ENCODE measurements at regions of chr17 and their contacts with region 1.

Region 1: DNA sequence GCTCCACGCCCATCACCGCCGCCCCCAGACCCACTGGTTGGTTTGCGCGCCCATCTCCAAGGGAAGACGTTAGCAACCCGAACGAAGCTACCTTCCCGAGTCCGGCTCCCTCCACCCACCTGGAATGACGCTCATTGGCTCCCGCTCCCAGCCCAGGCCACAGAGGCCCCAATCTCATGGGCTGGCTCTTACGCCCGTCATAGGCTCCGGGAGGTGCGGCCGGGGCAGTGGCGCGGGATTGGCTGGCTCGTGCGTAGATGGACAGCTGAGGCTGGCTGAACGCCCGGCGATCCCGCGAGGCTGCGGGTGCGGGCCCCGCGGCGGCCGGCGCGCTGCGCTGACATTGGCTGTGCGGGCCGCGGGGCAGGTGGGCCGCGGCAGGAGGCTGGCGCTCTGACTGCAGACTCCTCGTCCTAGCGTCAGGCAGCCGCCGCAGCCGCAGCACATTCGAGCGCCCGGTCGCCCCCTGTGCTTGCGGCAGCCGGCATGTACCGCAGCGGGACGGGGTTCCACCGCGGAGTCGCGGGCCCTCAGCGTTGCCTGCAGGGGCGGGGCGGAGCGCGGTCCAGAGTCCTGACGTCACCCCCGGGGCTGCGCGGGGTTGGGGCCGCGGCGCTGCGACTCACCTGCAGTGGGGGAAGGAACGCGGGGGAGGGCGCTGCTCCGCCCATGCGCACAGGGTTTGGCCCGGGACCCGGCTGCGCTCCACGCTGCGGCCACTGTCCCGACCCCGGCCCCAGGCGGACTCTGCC is 453 bp upstream of the MYH10 start:
- DNase-seq: peak; percentile 100
- ATAC-seq: peak; percentile 96
- H3K4me3 ChIP-seq: peak overlapping the region; percentile 75
- H3K27ac ChIP-seq: peak overlapping the region; percentile 30; the same call in 1 of the 2 replicates
- H3K4me1 ChIP-seq: peaks cover 2% of the 10 kb centered on the region; the same call in 1 of the 2 replicates
- H3K27me3 ChIP-seq: no peaks in the 10 kb centered on the region
- CTCF ChIP-seq: no peak
- POLR2A ChIP-seq: no peak
- RAD21 ChIP-seq: no peak

Region 2: DNA sequence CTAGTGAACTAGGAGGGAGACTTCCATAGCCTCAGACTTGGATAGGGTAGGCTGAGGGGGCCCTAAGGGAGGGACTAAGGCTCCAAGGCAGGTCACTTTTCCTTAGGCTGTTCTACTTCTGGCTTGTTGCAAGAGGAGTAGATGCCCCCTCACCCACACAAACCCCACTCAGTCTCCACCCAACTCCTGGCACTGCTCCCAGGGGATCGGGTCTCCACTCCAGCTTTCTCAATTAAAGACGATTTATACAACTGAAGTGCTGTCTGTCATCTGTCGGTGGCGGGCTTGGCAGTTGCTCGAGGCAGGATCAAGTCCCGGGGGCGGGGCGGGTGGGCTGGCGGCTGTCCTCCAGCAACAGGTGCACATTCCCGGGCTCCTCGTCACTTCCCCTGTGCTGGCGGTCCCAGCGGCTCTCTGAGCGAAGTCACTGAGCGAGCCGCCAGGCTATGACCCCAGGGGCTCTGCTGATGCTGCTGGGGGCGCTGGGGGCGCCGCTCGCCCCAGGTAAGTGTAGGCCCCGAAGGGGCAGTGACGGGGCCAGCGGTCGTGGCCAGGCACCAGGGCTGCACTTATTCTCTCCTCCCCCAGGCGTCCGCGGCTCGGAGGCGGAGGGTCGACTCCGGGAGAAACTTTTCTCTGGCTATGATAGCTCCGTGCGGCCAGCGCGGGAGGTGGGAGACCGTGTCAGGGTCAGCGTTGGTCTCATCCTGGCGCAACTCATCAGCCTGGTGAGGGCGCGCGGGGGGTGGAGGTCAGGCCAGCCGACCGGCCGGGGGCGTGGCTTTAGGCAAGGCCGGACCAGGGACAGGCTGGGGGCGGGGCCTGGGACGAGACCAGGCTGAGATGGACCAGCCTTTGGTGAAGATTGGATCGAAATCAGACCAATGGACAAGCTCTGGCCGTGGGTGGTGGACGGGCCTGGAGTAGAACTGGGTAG is 1186.0 kb before region 1 on chr17 and contains the start of gene CHRNB1:
- CTCF ChIA-PET with region 1: no interaction called
- POLR2A ChIA-PET with region 1: no interaction called
- dilution Hi-C with region 1: no loop called
- in situ Hi-C with region 1: no loop called
- intact Hi-C with region 1: no loop called
- DNase-seq: peak; percentile 27
- ATAC-seq: peak; percentile 82
- H3K4me3 ChIP-seq: peak within 1 kb of the TSS; percentile 32
- H3K27ac ChIP-seq: no peak within 1 kb of the TSS
- H3K4me1 ChIP-seq: peaks cover 22% of the 10 kb centered on the region
- H3K27me3 ChIP-seq: peaks cover 37% of the 10 kb centered on the region
- CTCF ChIP-seq: no peak
- POLR2A ChIP-seq: no peak
- RAD21 ChIP-seq: no peak
- total RNA-seq, gene CHRNB1: 4.2 and 4.3 TPM in 2 replicates

Region 3: DNA sequence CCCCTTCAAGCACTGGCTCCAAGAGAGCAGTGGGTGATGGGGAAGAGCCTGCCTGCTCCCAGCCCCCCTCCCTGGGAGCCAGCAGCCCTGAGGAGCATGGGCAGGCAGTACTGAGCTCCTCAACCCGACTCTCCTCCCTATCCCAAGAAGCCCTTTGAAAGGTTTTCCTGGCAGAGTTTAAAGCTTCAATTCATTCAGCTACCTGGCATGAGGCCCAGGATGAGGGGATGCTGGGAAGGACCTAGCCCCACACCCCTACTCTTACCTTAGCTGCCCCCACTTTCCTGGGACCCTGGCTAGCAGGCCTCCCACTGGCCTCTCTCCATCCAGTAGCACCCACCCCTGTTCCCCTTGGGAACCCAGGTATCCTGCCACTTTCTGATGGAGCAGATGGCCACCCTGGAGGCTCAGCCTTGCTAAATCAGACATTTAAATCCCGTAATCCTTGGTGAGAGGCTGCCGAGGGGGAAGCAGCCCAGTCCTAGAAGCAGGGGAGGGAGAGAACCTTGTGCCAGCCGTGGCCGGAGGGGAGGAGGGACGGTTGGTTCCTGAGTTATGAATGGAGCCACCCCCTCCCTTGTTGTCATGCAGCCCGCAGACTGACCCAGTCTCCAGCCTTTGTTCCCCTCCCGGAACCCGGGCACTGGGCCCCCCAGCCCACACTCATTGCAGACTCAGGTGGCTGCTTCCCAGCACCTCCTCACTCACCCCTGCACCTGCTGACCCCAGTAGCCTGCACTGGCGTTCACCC is 963.1 kb before region 1 on chr17:
- CTCF ChIA-PET with region 1: no interaction called
- POLR2A ChIA-PET with region 1: no interaction called
- dilution Hi-C with region 1: no loop called
- in situ Hi-C with region 1: no loop called
- intact Hi-C with region 1: no loop called
- DNase-seq: no peak
- ATAC-seq: no peak
- H3K4me3 ChIP-seq: no peak overlapping the region
- H3K27ac ChIP-seq: no peak overlapping the region
- H3K4me1 ChIP-seq: no peaks in the 10 kb centered on the region
- H3K27me3 ChIP-seq: no peaks in the 10 kb centered on the region
- CTCF ChIP-seq: no peak
- POLR2A ChIP-seq: no peak
- RAD21 ChIP-seq: no peak

Region 4: GRCh38 chr17:8383143-8383822 is 247.7 kb before region 1 on chr17 and contains the start of gene RPL26:
- CTCF ChIA-PET with region 1: no interaction called
- POLR2A ChIA-PET with region 1: no interaction called
- dilution Hi-C with region 1: no loop called
- in situ Hi-C with region 1: no loop called
- intact Hi-C with region 1: loop called (anchors 10 kb)
- DNase-seq: peak; percentile 98
- ATAC-seq: peak; percentile 86
- H3K4me3 ChIP-seq: peak within 1 kb of the TSS; percentile 98
- H3K27ac ChIP-seq: peak within 1 kb of the TSS; percentile 89
- H3K4me1 ChIP-seq: peaks cover 14% of the 10 kb centered on the region
- H3K27me3 ChIP-seq: no peaks in the 10 kb centered on the region
- CTCF ChIP-seq: peak; percentile 84
- POLR2A ChIP-seq: peak; percentile 99
- RAD21 ChIP-seq: peak; percentile 28; the same call in 1 of the 2 replicates
- total RNA-seq, gene RPL26: 5,013 and 5,721 TPM in 2 replicates

Region 5: GRCh38 chr17:8488901-8489300 is 142.1 kb before region 1 on chr17:
- CTCF ChIA-PET with region 1: no interaction called
- POLR2A ChIA-PET with region 1: no interaction called
- dilution Hi-C with region 1: no loop called
- in situ Hi-C with region 1: no loop called
- intact Hi-C with region 1: loop called (anchors 1 kb)
- DNase-seq: peak; percentile 98
- ATAC-seq: peak; percentile 98
- H3K4me3 ChIP-seq: no peak overlapping the region
- H3K27ac ChIP-seq: peak overlapping the region; percentile 3; the same call in 1 of the 2 replicates
- H3K4me1 ChIP-seq: peaks cover 2% of the 10 kb centered on the region; the same call in 1 of the 2 replicates
- H3K27me3 ChIP-seq: no peaks in the 10 kb centered on the region
- CTCF ChIP-seq: 0 out of 2 replicates have a peak, but pooled peaks have one; percentile 16
- POLR2A ChIP-seq: no peak
- RAD21 ChIP-seq: peak; percentile 31; the same call in 1 of the 2 replicates

Region 6: GRCh38 chr17:8563981-8564602 is 66.9 kb before region 1 on chr17:
- CTCF ChIA-PET with region 1: interaction called, 4 read pairs
- POLR2A ChIA-PET with region 1: no interaction called
- dilution Hi-C with region 1: no loop called
- in situ Hi-C with region 1: no loop called
- intact Hi-C with region 1: loop called (anchors 2 kb)
- DNase-seq: peak; percentile 73
- ATAC-seq: peak; percentile 91
- H3K4me3 ChIP-seq: no peak overlapping the region
- H3K27ac ChIP-seq: peak overlapping the region; percentile 53; the same call in 1 of the 2 replicates
- H3K4me1 ChIP-seq: peaks cover 8% of the 10 kb centered on the region
- H3K27me3 ChIP-seq: no peaks in the 10 kb centered on the region
- CTCF ChIP-seq: no peak
- POLR2A ChIP-seq: no peak
- RAD21 ChIP-seq: no peak

Region 7: DNA sequence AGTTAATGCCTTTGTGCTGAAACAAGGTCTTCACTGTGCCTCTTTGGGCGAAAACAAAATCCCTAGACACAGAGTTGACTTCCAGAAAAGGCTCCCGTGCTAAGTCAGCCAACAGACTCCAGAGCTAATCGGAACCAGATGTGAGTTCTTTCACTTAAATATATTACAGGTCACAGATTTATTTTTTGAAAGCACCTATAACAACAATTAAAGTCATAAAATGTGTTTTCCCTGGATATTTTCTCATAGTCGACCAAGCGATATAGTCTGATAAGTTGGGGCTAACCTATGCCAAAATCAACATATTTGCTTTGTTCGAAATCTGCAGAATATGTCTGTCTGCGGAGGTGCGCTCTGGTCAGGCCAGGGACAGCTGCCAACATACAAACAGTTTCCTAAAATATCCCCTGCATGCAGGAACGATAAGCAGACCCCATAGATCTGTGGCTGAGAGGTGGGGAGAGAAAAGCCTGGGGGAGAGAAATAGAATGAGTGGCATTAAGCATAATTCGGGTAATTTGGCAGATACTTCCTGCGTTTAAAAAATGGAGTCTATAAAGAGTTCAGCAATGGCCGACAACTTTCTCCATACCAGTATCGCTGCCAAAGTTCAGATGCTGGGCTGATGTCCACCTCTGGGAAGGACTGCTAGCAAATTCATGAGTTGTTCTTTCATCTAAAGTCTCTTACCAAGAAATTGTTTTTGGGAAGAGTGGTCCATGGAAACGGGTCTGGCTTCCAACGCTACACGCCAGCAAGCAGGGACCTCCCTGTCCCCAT is 50.4 kb after region 1 on chr17:
- CTCF ChIA-PET with region 1: no interaction called
- POLR2A ChIA-PET with region 1: no interaction called
- dilution Hi-C with region 1: no loop called
- in situ Hi-C with region 1: loop called (anchors 10 kb)
- intact Hi-C with region 1: no loop called
- DNase-seq: peak; percentile 65
- ATAC-seq: peak; percentile 42; the same call in 1 of the 2 replicates
- H3K4me3 ChIP-seq: no peak overlapping the region
- H3K27ac ChIP-seq: peak overlapping the region; percentile 56; the same call in 1 of the 2 replicates
- H3K4me1 ChIP-seq: peaks cover 4% of the 10 kb centered on the region
- H3K27me3 ChIP-seq: no peaks in the 10 kb centered on the region
- CTCF ChIP-seq: no peak
- POLR2A ChIP-seq: no peak
- RAD21 ChIP-seq: no peak

Region 8: GRCh38 chr17:8698162-8699061 is 67.4 kb after region 1 on chr17:
- CTCF ChIA-PET with region 1: no interaction called
- POLR2A ChIA-PET with region 1: no interaction called
- dilution Hi-C with region 1: no loop called
- in situ Hi-C with region 1: no loop called
- intact Hi-C with region 1: loop called (anchors 1 kb)
- DNase-seq: peak; percentile 79
- ATAC-seq: peak; percentile 52
- H3K4me3 ChIP-seq: no peak overlapping the region
- H3K27ac ChIP-seq: peak overlapping the region; percentile 98
- H3K4me1 ChIP-seq: peaks cover 25% of the 10 kb centered on the region
- H3K27me3 ChIP-seq: no peaks in the 10 kb centered on the region
- CTCF ChIP-seq: no peak
- POLR2A ChIP-seq: no peak
- RAD21 ChIP-seq: no peak

Region 9: GRCh38 chr17:8745586-8746500 is 114.9 kb after region 1 on chr17:
- CTCF ChIA-PET with region 1: interaction called, 3 read pairs
- POLR2A ChIA-PET with region 1: no interaction called
- dilution Hi-C with region 1: no loop called
- in situ Hi-C with region 1: no loop called
- intact Hi-C with region 1: loop called (anchors 1 kb)
- DNase-seq: peak; percentile 29
- ATAC-seq: peak; percentile 97
- H3K4me3 ChIP-seq: peak overlapping the region; percentile 52
- H3K27ac ChIP-seq: peak overlapping the region; percentile 53
- H3K4me1 ChIP-seq: no peaks in the 10 kb centered on the region
- H3K27me3 ChIP-seq: peaks cover 14% of the 10 kb centered on the region
- CTCF ChIP-seq: peak; percentile 76
- POLR2A ChIP-seq: no peak
- RAD21 ChIP-seq: peak; percentile 89

Region 10: DNA sequence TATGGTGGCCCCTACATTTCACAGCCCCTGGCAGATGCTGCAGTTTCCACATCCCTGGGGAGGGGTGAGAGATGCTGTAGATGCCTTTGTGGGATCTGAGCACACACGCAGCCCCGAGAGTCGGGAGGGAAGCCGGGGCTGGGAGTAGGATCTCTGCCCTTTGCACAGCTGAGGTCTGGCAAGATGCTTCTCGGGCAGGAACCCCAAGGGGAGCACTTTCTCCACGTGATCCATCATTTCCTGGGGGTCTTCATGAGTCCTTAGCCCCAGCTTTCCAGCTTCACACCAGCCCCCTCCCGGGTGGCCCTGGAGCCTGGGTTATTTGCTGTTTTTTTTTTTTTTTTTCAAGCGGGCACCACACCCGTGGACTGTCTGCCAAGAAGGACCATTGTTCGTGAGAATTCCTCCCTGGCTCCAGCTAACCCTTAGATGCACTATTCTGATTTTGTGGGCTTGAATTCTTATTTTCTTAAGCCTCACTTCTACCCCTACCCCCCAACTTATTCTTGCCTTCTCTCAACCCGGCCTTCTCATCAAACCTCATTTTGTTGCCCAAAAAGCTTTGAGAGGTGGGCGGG is 441.0 kb after region 1 on chr17:
- CTCF ChIA-PET with region 1: no interaction called
- POLR2A ChIA-PET with region 1: no interaction called
- dilution Hi-C with region 1: no loop called
- in situ Hi-C with region 1: no loop called
- intact Hi-C with region 1: no loop called
- DNase-seq: no peak
- ATAC-seq: no peak
- H3K4me3 ChIP-seq: no peak overlapping the region
- H3K27ac ChIP-seq: no peak overlapping the region
- H3K4me1 ChIP-seq: no peaks in the 10 kb centered on the region
- H3K27me3 ChIP-seq: no peaks in the 10 kb centered on the region
- CTCF ChIP-seq: no peak
- POLR2A ChIP-seq: no peak
- RAD21 ChIP-seq: no peak